Activated naive CD4-positive, alpha-beta T cell treated with anti-CD3 and anti-CD28 coated beads for 36 hours (primary cell): ENCODE measurements at regions of chr15 and their contacts with region 1.

Region 1: DNA sequence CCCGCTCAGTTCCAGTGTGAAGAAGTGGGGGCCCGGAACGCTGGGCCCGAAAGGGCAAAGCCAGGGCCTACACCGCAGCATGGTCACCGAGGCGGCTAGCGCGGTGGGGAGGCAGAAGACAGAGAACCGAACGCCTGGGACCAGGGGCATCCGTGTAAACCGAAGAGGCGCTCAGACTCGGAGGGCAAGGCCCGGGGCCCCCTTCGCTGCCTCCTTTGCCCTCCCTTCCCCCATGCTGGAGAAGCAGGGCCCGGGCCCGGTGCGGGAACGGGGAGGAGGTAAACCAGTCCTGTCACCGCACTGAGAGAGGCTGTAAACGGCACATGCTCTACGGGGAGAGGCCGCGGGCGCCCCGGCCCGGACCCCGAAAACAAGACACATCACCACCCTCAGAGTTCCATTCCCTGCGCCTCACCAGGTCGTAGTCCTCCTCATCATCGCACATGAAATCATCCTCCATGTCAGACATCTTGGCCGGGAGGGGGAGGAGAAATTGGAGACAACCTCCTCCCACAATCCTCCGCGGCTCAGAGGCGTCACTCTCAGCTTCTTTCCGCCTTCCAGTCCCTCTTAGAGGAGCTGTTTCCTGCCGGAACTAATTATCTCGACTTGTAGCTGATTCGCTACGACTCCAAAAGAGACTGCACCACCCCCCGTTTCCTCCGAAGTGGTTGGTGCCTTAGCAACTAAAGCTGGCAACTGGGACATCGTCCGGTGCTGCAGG is at the start of gene COPS2:
- DNase-seq: peak; percentile 97
- H3K4me3 Mint-ChIP-seq: peak within 1 kb of the TSS; percentile 98
- H3K27ac Mint-ChIP-seq: peak within 1 kb of the TSS; percentile 97
- H3K4me1 Mint-ChIP-seq: peaks cover 41% of the 10 kb centered on the region
- H3K27me3 Mint-ChIP-seq: no peaks in the 10 kb centered on the region
- total RNA-seq, gene COPS2: 79.7 to 86.4 TPM

Region 2: GRCh38 chr15:48177766-48178647 is 977.3 kb before region 1 on chr15 and contains the start of gene MYEF2:
- CTCF ChIA-PET with region 1: no interaction called
- intact Hi-C with region 1: loop called (anchors 10 kb)
- DNase-seq: peak; percentile 83
- H3K4me3 Mint-ChIP-seq: peak within 1 kb of the TSS; percentile 78
- H3K27ac Mint-ChIP-seq: peak within 1 kb of the TSS; percentile 85
- H3K4me1 Mint-ChIP-seq: peaks cover 14% of the 10 kb centered on the region
- H3K27me3 Mint-ChIP-seq: peaks cover 23% of the 10 kb centered on the region
- total RNA-seq, gene MYEF2: 31.7 to 32.7 TPM

Region 3: DNA sequence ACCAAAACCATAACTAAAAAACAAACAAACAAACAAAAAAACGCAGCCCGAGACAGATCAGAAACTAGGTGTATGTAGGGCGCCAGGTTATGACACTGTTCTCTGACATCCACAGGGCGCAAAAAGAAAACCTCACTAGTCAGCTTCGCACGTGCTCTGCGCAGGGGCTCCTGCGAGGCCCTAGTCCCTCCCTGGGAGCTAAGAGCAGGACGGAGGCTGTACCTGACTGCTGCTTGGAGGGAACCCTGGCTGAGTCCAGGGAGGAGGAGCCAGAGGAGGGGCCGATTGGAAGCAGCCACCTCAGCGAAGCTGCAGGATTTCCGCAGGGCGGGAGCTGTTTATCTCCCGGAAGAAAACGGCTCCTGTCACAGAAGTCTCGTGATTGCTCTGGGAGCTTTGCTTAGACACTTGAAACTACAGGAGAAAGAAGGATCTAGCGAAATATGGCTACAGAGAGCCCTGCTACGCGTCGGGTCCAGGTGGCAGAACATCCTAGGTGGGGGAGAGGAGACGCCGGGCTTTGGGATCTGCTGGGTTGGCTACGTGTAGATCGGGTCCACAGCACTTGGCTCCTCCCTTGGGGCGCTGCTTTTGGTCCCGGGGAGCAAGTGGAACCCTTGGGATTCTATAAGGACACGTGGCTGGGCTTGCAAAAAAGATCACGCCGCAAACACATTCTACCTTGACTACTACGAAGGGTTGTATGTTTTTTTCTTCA is 14.8 kb after region 1 on chr15 and contains the start of gene GALK2:
- CTCF ChIA-PET with region 1: no interaction called
- intact Hi-C with region 1: loop called (anchors 1 kb)
- DNase-seq: peak; percentile 91
- H3K4me3 Mint-ChIP-seq: peak within 1 kb of the TSS; percentile 96
- H3K27ac Mint-ChIP-seq: peak within 1 kb of the TSS; percentile 94
- H3K4me1 Mint-ChIP-seq: peaks cover 25% of the 10 kb centered on the region
- H3K27me3 Mint-ChIP-seq: no peaks in the 10 kb centered on the region
- total RNA-seq, gene GALK2: 22.6 to 24.1 TPM

Region 4: GRCh38 chr15:49225613-49226281 is 70.5 kb after region 1 on chr15:
- CTCF ChIA-PET with region 1: no interaction called
- intact Hi-C with region 1: no loop called
- DNase-seq: no peak
- H3K4me3 Mint-ChIP-seq: no peak overlapping the region
- H3K27ac Mint-ChIP-seq: no peak overlapping the region
- H3K4me1 Mint-ChIP-seq: peaks cover 3% of the 10 kb centered on the region
- H3K27me3 Mint-ChIP-seq: no peaks in the 10 kb centered on the region

Region 5: DNA sequence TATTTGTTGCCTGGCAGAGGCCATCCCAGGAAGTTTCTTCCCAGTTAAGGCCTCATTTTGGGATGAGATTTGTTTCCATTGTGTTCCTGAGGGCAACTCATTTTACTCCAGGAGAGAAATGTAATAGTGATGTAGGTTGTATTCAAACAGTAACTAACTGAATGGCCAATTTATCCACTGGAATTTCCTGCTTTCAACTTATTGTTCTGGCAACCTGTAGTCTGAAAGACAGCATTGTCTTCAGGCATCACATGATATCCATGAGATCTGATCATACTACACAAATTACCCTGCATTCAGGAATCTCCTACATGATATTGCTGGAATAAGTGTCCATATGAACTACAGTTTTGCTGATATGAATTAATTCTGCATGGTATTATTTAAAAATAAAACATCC is 188.3 kb after region 1 on chr15:
- CTCF ChIA-PET with region 1: no interaction called
- intact Hi-C with region 1: no loop called
- DNase-seq: no peak
- H3K4me3 Mint-ChIP-seq: no peak overlapping the region
- H3K27ac Mint-ChIP-seq: no peak overlapping the region
- H3K4me1 Mint-ChIP-seq: no peaks in the 10 kb centered on the region
- H3K27me3 Mint-ChIP-seq: no peaks in the 10 kb centered on the region

Region 6: DNA sequence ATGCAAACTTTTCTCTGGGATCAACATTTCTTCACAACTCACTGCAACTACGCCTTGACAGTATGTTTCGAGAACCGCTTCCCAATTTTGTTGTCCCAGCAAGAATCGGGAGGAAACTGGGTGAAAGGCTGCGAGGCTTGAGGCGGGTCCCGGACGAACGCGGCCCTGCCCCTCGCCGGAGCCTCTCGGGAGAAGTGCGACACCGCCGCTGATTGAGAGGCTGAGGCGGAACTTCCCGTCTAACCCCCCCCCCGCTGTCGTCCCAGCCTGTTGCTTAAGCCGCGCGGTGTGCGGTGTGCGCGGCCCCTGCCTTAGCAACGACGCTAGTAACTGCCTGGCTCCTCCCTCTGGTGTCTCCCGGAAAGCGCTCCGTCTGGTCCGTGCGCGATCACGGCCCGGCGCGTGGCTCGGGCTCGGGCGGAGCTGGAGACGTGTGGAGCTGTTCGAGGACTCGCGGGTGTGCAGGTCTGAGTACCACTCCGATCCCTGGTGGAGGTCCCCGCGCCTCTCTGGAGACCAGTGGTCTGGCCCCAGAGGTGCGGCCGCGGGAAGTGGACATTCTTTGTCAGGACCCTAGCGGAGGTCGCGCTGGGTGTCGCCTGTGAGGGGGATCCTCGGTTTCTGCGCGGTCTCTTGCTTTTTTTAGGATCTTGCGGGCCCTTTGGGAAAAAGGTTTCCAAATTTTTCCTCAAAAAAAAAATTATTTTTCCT is 465.5 kb after region 1 on chr15 and contains the starts of genes DTWD1 and FAM227B:
- CTCF ChIA-PET with region 1: no interaction called
- intact Hi-C with region 1: loop called (anchors 1 kb)
- DNase-seq: peak; percentile 96
- H3K4me3 Mint-ChIP-seq: peak within 1 kb of the TSS; percentile 88
- H3K27ac Mint-ChIP-seq: peak within 1 kb of the TSS; percentile 91
- H3K4me1 Mint-ChIP-seq: peaks cover 33% of the 10 kb centered on the region
- H3K27me3 Mint-ChIP-seq: no peaks in the 10 kb centered on the region
- total RNA-seq, gene DTWD1: 18.5 to 19.4 TPM
- total RNA-seq, gene FAM227B: 2.0 to 2.8 TPM

Region 7: DNA sequence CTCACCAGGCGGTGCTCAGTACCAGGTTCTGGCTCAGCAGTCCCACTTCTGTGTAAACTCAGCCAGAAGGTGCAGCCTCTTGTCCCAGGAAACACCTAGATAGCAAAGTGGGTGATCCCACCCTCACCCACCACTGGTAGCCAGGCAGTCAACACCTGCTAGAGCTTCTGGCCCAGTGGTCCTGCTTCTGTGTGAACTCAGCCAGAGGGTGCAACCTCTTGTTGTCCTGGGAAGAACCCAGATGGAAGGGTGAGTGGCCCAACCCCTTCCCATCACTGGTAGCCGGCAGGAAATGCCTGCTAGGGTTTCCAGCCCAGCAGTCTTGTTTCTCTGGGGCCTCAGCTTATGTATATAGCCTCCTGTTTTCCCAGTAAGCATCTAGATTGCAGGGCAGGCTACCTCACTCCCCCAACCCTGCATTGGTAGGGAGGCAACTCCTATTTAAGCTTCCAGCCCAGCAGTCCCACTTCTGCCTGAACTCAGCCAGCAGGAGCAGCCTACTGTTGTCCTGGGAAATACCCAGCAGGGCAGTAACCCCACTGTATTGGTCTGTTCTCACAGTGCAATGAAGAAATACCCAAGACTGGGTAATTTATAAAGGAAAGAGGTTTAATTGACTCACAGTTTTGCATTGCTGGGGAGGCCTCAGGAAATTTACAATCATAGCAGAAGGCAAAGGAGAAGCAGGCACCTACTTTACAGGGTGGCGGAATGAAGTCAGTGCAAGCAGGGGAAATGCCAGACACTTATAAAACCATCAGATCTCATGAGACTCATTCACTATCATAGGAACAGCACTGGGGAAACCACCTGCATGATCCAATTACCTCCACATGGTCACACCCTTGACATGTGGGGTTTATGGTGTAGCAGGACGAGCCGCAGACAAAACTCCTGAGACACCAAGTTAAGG is 576.2 kb after region 1 on chr15:
- CTCF ChIA-PET with region 1: no interaction called
- intact Hi-C with region 1: no loop called
- DNase-seq: no peak
- H3K4me3 Mint-ChIP-seq: no peak overlapping the region
- H3K27ac Mint-ChIP-seq: no peak overlapping the region
- H3K4me1 Mint-ChIP-seq: no peaks in the 10 kb centered on the region
- H3K27me3 Mint-ChIP-seq: peaks cover 2% of the 10 kb centered on the region

Region 8: DNA sequence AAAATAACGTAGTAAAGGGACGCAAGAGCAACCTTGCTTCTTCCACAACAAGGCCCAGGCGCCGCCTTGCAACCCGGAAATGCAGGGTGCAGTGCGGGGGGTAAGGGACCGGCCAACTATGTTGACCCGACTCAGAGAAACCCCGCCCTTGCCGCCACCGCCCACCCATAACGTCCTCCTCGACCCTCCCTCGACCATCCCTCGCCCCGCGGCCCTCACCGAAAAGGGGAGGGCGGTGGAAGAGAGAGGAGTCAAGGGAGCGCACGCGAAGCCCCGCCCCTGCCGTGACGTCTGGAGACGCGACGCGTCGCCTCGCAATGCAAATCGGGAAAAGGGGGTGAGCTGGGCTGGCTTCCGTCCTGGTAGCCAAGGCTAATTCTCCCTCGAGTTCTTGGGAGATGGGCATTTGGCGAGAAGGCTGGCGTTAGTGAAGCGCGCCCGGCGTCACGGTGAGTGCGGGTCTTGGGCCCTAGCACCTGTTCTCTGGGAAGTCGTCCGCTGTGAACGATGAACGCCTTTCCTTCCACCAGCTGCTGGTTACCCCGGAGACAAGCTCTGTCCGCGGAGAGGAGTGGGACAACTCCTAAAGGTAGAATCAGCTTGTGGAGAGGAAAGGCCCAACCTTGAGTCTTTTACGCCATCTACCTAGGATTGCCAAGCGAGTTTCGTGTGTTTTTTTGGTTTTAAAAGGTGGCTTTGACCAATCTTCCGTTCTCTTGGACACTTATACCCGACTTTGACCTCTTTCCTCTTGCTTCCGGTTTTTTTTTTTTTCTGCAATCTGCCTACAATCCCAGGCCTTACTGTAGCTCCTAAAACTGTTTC is 1269.0 kb after region 1 on chr15 and contains the start of gene USP8:
- CTCF ChIA-PET with region 1: no interaction called
- intact Hi-C with region 1: loop called (anchors 5 kb)
- DNase-seq: peak; percentile 96
- H3K4me3 Mint-ChIP-seq: peak within 1 kb of the TSS; percentile 94
- H3K27ac Mint-ChIP-seq: peak within 1 kb of the TSS; percentile 92
- H3K4me1 Mint-ChIP-seq: peaks cover 30% of the 10 kb centered on the region
- H3K27me3 Mint-ChIP-seq: no peaks in the 10 kb centered on the region
- total RNA-seq, gene USP8: 31.6 TPM